Mucosa of descending colon (tissue), 3 donors: ENCODE measurements at regions of chr1 and their contacts with region 1.

Region 1: DNA sequence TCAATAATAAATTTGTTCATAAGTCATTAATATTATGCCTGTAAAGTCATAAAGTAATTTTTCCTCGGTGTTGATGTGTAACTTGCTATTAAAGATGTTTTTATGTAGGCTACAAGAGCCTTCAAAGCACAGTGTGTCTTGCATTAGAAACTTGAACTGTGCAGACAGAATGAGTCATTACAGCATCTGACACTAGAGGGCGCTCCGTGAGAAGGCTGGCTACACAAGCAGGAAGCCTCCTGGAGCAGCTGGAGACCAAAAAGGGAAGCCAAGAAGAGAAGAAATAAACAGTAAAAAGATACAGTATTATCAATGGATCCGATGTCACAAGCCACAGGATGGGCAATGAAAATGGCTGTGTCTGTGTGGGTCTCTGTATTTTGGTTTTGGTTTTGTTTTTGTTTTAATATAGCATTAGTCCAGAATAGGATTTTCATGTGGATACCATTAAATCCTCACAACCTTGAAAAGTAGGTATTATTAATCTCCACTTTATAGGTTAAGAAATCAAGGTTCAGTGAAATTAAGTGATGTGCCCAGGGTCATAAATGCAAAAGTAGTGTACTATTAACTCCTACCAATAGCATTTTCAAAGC is 16.1 kb upstream of the LRRC8D start:
- DNase-seq: peak; percentile 62 to 96 (median 63)
- ATAC-seq: peak; percentile 98
- H3K4me3 ChIP-seq: no peak overlapping the region
- H3K4me1 ChIP-seq: peaks cover 5% of the 10 kb centered on the region
- CTCF ChIP-seq: peak; percentile 81

Region 2: GRCh38 chr1:89739013-89739843 is 65.5 kb before region 1 on chr1:
- intact Hi-C with region 1: no loop called
- DNase-seq: no peak
- ATAC-seq: peak; percentile 47
- H3K4me3 ChIP-seq: no peak overlapping the region
- H3K4me1 ChIP-seq: no peaks in the 10 kb centered on the region
- CTCF ChIP-seq: no peak

Region 3: DNA sequence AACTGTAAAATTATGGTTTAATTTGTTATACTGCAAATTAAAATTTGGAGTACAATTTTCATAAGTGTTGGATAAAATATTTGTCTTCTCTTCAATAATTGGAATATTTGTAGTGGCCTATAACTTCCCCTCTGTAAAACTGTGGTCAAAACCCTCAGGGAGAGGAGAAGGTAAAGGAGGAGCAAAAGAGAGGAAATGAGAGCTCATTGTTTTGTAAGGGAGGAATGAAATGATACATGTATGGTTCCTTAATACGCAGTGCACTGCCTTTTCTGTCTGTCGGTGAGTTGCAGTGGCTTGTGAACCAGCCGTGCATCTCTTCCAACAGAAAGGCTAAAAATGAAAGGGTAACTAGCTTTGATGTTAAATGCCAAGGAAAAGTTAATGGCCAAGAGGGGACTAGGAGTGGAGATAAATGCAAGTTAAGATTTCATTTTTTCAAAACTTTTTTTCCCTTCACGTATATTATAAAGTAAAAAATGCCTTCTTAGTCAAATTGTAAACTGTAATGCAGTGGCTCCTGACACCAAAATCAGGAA is 42.5 kb after region 1 on chr1:
- intact Hi-C with region 1: loop called in 1 of 2 experiments (anchors 5 kb)
- DNase-seq: no peak
- ATAC-seq: no peak
- H3K4me3 ChIP-seq: no peak overlapping the region
- H3K4me1 ChIP-seq: peaks cover 9% of the 10 kb centered on the region
- CTCF ChIP-seq: no peak

Region 4: DNA sequence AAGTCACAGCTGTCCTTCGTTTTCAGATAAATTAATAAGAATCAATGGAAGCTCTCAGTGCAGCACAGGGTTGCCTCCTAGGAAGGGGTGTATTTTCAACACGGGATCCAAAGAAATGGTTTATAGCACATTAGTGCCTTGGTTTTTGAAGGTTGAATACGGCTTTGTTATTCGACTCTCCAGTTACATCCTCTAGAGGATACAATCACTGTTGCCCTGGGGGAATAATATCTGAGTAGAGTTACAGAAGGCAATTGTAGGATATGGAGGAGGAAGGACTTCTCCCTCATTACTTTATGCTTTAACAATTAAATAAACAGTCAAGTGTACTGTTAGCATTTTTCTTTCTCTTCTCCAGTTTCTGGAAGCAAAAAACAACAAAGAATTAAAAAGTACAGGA is 175.9 kb after region 1 on chr1:
- intact Hi-C with region 1: loop called in 1 of 2 experiments (anchors 5 kb)
- DNase-seq: no peak
- ATAC-seq: no peak
- H3K4me3 ChIP-seq: no peak overlapping the region
- H3K4me1 ChIP-seq: no peaks in the 10 kb centered on the region
- CTCF ChIP-seq: no peak

Region 5: GRCh38 chr1:89987170-89987819 is 182.6 kb after region 1 on chr1:
- intact Hi-C with region 1: loop called (anchors 2 to 5 kb)
- DNase-seq: peak in 1 of 3 donors; percentile 80
- ATAC-seq: peak; percentile 59
- H3K4me3 ChIP-seq: no peak overlapping the region
- H3K4me1 ChIP-seq: peaks cover 22% of the 10 kb centered on the region
- CTCF ChIP-seq: peak; percentile 61

Region 6: GRCh38 chr1:89994805-89995597 is 190.3 kb after region 1 on chr1 and contains the start of gene ZNF326:
- intact Hi-C with region 1: loop called in 1 of 2 experiments (anchors 5 kb)
- DNase-seq: peak; percentile 96 to 99 (median 97)
- ATAC-seq: peak; percentile 95
- H3K4me3 ChIP-seq: peak within 1 kb of the TSS; percentile 83
- H3K4me1 ChIP-seq: peaks cover 39% of the 10 kb centered on the region
- CTCF ChIP-seq: no peak
- total RNA-seq, gene ZNF326: 25.8 to 41.5 (median 40.1) TPM